Activated CD4-positive, alpha-beta memory T cell treated with anti-CD3 and anti-CD28 coated beads for 36 hours (primary cell): ENCODE measurements at regions of chr2 and their contacts with region 1.

Region 1: DNA sequence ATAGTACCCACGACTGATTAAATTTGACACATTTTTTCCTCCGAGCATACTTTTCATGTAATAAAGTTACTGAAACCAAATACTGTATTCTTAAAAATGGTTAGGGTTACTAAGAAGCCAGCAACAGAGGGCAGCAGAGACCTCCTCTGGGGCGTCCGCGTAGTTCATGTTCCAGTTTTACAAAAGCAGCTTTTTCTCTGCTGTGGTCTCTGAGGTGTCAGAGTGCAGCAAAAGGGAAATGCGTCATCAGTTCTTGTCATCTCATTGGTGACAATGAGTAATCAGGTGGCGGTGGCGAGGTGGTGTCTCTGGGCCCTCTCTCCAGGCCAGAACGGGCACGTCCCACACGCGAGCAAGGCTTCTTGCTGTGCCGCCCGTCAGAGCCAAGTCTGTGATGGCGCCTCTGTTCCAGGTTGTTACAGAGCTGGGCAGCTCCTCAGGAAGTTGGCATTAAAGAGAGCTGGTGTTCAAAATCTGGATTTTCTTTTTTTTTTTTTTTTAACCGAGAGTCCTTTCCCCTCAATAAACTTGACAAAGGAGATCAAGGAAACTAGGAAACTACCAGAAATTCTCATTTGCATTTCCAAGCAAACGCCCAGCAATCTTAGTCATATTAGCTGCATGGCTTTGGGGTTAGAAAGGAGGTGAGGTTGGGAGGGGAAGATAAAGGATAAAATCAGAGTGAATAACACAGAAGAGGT is 98.6 kb upstream of the BZW1 start:
- DNase-seq: peak; percentile 96
- H3K4me3 Mint-ChIP-seq: peak overlapping the region; percentile 66
- H3K27ac Mint-ChIP-seq: peak overlapping the region; percentile 100
- H3K4me1 Mint-ChIP-seq: peaks cover 33% of the 10 kb centered on the region
- H3K27me3 Mint-ChIP-seq: peaks cover 5% of the 10 kb centered on the region

Region 2: DNA sequence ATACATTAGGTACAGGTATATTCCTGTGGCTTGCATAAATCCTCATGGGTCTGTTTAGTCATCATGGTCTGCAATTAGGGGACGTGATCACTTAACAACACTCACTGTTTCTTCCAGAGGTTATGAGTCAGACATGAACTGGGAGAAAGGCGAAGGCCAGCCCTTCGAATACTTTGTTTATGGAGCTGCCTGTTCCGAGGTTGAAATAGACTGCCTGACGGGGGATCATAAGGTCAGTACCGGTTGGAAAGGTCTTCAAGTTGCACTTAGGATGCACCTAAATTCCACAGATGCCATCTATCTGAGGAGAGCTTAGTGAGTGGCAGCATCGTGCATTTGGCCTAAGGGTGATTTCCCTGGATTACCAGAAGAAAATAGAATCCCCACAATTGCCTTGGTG is 50.4 kb before region 1 on chr2:
- CTCF ChIA-PET with region 1: no interaction called
- POLR2A ChIA-PET with region 1: no interaction called
- intact Hi-C with region 1: no loop called
- DNase-seq: no peak
- H3K4me3 Mint-ChIP-seq: no peak overlapping the region
- H3K27ac Mint-ChIP-seq: no peak overlapping the region
- H3K4me1 Mint-ChIP-seq: no peaks in the 10 kb centered on the region
- H3K27me3 Mint-ChIP-seq: peaks cover 34% of the 10 kb centered on the region

Region 3: DNA sequence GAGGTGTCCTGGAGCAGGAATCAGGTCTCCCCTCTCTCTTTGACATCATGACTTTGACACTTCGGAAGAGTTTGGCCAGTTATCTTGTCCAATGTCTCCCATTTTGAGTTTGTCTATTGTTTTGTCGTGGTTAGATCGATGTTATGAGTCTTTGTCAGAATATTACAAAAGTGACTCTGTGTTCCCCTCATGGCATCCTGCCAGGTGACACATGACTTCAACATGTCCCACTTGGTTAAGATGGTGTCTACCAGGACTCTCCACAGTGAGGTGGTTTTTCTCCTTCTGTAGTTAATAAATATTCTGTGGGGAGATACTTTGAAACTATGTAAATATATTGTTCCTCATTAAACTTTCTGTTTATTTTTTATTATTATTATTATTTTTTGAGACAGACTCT is 21.9 kb after region 1 on chr2:
- CTCF ChIA-PET with region 1: interaction called, 46 read pairs
- POLR2A ChIA-PET with region 1: no interaction called
- intact Hi-C with region 1: loop called (anchors 1 kb)
- DNase-seq: peak; percentile 53
- H3K4me3 Mint-ChIP-seq: no peak overlapping the region
- H3K27ac Mint-ChIP-seq: no peak overlapping the region
- H3K4me1 Mint-ChIP-seq: peaks cover 12% of the 10 kb centered on the region
- H3K27me3 Mint-ChIP-seq: peaks cover 4% of the 10 kb centered on the region

Region 4: DNA sequence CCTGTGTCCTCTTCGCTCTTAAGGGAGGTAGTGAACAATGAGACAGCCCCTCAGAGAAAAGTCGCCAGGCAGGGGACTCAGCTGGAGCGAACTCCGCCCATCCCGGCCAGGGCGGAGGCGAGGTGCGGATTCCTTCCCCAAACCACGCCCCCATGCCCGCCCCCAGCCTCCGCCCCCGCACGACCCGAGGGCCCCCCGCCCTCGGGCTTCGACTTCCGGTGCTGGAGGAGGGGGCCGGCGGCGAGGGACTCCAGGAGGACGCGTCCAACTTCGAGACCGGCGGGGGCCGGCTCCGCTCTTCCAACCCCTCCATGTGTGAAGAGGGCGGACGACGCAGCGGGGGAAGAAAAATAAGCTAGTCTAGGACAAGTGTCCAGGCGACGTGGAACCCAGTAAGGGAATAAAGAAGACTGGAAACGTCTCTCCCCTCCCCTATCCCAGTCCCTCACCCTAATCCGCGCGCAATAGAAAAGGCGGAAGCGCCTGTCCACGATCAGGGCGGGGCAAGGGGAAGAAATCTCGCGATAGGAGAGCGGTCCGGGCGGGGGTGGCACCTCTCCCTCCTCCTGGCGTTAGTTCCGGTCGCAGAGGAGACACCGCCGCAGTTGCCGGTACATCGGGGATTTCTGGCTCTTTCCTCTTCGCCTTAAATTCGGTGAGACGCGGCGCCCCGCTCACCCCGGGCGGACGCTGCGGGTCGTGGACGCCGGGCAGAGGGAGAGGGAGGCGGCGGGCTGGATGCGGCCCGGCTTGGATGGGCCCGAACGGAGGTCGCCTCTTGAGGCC is 98.4 kb after region 1 on chr2 and contains the start of gene BZW1:
- CTCF ChIA-PET with region 1: interaction called, 24 read pairs
- POLR2A ChIA-PET with region 1: interaction called, 24 read pairs
- intact Hi-C with region 1: loop called (anchors 1 kb)
- DNase-seq: peak; percentile 98
- H3K4me3 Mint-ChIP-seq: peak within 1 kb of the TSS; percentile 100
- H3K27ac Mint-ChIP-seq: peak within 1 kb of the TSS; percentile 100
- H3K4me1 Mint-ChIP-seq: peaks cover 44% of the 10 kb centered on the region
- H3K27me3 Mint-ChIP-seq: peaks cover 1% of the 10 kb centered on the region
- total RNA-seq, gene BZW1: 416 to 423 TPM

Region 5: DNA sequence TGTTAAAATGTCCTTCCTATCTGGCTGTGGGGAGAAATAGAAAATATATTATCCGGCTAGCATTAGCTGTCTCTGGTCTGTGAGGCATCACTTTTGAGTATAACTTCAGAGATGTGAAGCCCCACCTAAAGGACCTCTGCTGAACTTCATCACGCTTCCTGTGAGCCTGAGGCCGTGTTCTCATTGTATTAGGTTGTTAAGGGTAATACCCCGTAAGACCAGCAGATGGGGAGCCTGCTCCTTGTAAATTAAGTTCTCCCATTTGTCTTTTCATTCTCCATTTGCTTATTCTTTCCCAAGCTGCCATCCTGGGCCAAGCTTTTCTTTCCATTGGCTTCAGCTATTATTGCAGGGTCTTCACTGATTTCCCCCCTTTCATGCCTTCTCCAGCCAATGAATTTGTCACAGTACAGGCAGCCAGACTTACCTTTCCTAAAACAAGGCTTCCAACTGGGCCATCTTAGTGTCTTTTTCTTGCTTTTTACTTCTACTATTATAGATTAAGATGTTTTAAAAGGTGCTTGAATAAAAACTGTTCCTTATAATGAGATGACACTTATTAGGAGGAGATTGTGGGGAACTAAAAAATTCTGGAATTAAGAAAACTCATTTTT is 188.4 kb after region 1 on chr2:
- CTCF ChIA-PET with region 1: interaction called, 5 read pairs
- POLR2A ChIA-PET with region 1: no interaction called
- intact Hi-C with region 1: loop called (anchors 1 kb)
- DNase-seq: peak; percentile 79
- H3K4me3 Mint-ChIP-seq: no peak overlapping the region
- H3K27ac Mint-ChIP-seq: peak overlapping the region; percentile 69
- H3K4me1 Mint-ChIP-seq: peaks cover 9% of the 10 kb centered on the region
- H3K27me3 Mint-ChIP-seq: no peaks in the 10 kb centered on the region

Region 6: DNA sequence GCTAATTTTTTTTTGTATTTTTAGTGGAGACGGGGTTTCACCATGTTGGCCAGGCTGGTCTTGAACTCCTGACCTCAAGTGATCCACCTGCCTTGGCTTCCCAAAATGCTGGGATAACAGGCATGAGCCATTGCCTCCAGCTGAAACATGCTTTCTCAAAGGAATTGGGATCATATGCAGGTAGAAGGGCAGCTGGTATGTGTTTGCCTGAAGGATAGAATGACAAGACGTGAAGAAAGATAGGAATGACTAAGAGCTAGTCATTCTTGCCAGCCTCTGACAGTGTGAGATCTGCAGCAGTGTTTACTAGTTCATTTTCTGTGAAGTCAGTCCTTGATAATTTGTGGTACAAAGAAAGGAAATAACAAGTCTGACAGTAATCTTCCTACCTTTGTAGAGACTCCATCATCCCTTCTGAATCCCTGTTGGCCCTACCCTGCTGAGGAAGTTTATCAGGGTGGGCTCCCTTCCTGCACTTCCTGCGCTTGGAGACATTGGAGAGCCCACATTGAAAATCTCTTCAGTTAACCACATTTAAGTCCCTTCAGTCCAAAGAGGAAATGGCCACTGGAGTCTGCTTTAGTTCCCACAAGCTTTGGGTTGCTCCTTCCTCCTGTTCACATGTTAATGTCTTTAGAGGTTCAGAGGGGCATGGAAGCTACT is 417.5 kb after region 1 on chr2:
- CTCF ChIA-PET with region 1: no interaction called
- POLR2A ChIA-PET with region 1: interaction called, 4 read pairs
- intact Hi-C with region 1: loop called (anchors 2 kb)
- DNase-seq: peak; percentile 55
- H3K4me3 Mint-ChIP-seq: peak overlapping the region; percentile 92
- H3K27ac Mint-ChIP-seq: peak overlapping the region; percentile 94
- H3K4me1 Mint-ChIP-seq: peaks cover 54% of the 10 kb centered on the region
- H3K27me3 Mint-ChIP-seq: no peaks in the 10 kb centered on the region